ENCODE measurements at regions of chr1 and their contacts with region 1.

Region 1: DNA sequence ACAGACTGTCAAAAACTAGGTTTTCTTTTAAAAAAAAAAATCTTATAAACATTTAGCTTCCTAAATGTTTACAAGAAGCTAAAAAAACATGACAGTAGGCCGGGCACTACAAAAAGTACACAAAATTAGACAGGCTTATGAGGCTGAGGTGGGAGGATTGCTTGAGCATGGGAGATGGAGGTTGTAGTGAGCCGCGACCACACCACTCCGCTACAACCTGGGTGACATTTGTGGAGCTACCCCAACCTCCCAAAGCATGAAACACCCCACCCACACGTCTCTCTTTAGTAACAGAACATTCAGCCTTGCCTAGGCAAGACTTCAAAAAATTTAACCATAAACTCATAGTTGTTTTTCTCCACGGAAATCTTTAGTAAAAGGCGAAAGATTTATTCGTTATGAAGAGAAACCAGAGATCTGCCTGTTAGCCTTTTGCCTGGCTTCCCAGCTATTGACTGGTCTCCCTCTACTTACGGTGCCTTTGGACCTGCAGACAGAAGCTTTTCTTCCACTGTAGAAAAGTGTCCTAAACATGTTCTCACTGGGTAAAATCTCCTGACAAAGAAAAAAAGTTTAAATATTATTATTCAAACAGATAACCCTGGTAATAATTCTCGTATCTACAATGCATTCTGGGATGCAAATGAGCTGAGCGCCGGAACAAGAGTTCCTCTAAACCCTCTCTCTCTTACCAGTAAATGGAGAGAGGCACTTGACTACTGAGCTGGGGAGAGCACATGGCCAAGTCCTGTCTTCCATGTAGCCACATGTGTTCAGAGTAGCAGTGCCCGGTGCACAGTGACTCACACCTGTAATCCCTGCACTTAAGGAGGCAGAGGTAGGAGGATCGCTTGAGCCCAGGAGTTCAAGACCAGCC is 9.2 kb downstream of the RNU5D-1 start:
- DNase-seq: peak; percentile 93
- ATAC-seq: peak; percentile 86
- H3K4me3 Mint-ChIP-seq: peak overlapping the region; percentile 52
- H3K27ac Mint-ChIP-seq: peak overlapping the region; percentile 99
- H3K4me1 Mint-ChIP-seq: peaks cover 75% of the 10 kb centered on the region
- H3K27me3 Mint-ChIP-seq: no peaks in the 10 kb centered on the region

Region 2: GRCh38 chr1:44631647-44632539 is 89.8 kb before region 1 on chr1:
- CTCF ChIA-PET with region 1: interaction called, 3 read pairs
- POLR2A ChIA-PET with region 1: interaction called, 31 read pairs
- DNase-seq: peak; percentile 94
- ATAC-seq: peak; percentile 86
- H3K4me3 Mint-ChIP-seq: peak overlapping the region; percentile 88
- H3K27ac Mint-ChIP-seq: peak overlapping the region; percentile 97
- H3K4me1 Mint-ChIP-seq: peaks cover 27% of the 10 kb centered on the region
- H3K27me3 Mint-ChIP-seq: no peaks in the 10 kb centered on the region

Region 3: DNA sequence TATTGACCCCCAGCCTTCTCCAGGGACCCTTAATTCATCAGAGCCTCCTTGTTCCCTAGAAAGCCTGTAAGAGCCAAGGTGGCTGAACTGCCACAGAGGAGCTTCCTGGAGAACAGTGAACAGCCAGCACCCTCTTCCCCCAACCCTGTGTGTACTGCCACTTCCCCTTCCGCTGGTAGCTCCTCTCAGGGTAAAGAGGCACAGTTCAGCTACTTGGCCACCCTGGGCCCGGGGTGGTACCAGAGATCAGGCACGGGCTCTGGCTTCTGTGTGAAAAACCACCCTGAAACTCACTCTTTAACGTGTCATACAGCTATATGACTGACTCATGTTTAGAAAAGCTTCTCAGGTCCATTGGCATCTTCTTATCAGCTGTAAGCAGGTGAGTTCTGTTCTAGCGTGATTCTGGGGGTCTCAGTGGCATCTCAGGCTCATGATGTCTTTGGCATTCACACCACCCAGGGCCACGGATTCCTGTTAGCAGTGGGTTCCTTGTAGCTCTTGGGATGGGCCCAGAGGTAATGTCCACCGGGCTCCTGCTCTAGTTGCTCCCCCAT is 24.9 kb before region 1 on chr1:
- CTCF ChIA-PET with region 1: interaction called, 19 read pairs
- POLR2A ChIA-PET with region 1: interaction called, 75 read pairs
- DNase-seq: peak; percentile 71
- ATAC-seq: peak; percentile 94
- H3K4me3 Mint-ChIP-seq: peak overlapping the region; percentile 42
- H3K27ac Mint-ChIP-seq: peak overlapping the region; percentile 89
- H3K4me1 Mint-ChIP-seq: peaks cover 31% of the 10 kb centered on the region
- H3K27me3 Mint-ChIP-seq: no peaks in the 10 kb centered on the region

Region 4: GRCh38 chr1:44747878-44748277 is 26.2 kb after region 1 on chr1:
- CTCF ChIA-PET with region 1: interaction called, 4 read pairs
- POLR2A ChIA-PET with region 1: interaction called, 64 read pairs
- DNase-seq: no peak
- ATAC-seq: no peak
- H3K4me3 Mint-ChIP-seq: no peak overlapping the region
- H3K27ac Mint-ChIP-seq: no peak overlapping the region
- H3K4me1 Mint-ChIP-seq: peaks cover 32% of the 10 kb centered on the region
- H3K27me3 Mint-ChIP-seq: no peaks in the 10 kb centered on the region

Region 5: GRCh38 chr1:44786138-44786840 is 64.6 kb after region 1 on chr1:
- CTCF ChIA-PET with region 1: interaction called, 3 read pairs
- POLR2A ChIA-PET with region 1: interaction called, 65 read pairs
- DNase-seq: peak; percentile 82
- ATAC-seq: peak; percentile 64
- H3K4me3 Mint-ChIP-seq: peak overlapping the region; percentile 64
- H3K27ac Mint-ChIP-seq: peak overlapping the region; percentile 74
- H3K4me1 Mint-ChIP-seq: peaks cover 42% of the 10 kb centered on the region
- H3K27me3 Mint-ChIP-seq: no peaks in the 10 kb centered on the region

Region 6: DNA sequence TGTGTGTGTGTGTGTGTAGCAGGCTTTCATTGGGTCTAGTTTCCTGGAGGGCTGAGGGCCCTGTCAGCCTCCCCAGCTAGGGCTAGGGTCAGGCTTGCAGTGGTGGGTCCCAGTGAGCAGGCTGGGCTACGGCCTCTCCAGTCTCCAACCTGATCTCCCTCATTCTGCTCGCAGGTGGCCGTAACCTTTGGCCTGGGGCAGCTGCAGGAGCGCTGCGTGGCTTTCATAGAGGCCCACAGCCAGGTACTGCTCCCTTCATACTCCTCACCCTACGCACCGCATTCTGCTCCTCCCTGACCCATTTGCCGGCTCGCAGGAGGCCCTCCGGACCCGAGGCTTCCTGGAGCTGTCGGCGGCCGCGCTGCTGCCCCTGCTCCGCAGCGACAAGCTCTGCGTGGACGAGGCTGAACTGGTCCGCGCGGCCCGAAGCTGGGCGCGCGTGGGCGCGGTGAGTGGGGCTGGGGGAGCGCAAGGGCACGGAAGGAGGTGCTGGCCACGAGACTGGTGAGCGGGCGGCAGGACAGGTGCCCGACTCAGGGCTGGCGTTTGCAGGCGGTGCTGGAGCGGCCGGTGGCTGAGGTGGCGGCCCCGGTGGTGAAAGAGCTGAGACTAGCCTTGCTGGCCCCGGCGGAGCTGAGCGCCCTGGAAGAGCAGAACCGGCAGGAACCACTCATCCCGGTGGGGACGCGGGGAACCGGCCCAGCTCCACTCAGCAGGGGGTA is 91.3 kb after region 1 on chr1:
- CTCF ChIA-PET with region 1: no interaction called
- POLR2A ChIA-PET with region 1: interaction called, 564 read pairs
- DNase-seq: no peak
- ATAC-seq: no peak
- H3K4me3 Mint-ChIP-seq: peak overlapping the region; percentile 84
- H3K27ac Mint-ChIP-seq: peak overlapping the region; percentile 100
- H3K4me1 Mint-ChIP-seq: peaks cover 70% of the 10 kb centered on the region
- H3K27me3 Mint-ChIP-seq: no peaks in the 10 kb centered on the region

Region 7: DNA sequence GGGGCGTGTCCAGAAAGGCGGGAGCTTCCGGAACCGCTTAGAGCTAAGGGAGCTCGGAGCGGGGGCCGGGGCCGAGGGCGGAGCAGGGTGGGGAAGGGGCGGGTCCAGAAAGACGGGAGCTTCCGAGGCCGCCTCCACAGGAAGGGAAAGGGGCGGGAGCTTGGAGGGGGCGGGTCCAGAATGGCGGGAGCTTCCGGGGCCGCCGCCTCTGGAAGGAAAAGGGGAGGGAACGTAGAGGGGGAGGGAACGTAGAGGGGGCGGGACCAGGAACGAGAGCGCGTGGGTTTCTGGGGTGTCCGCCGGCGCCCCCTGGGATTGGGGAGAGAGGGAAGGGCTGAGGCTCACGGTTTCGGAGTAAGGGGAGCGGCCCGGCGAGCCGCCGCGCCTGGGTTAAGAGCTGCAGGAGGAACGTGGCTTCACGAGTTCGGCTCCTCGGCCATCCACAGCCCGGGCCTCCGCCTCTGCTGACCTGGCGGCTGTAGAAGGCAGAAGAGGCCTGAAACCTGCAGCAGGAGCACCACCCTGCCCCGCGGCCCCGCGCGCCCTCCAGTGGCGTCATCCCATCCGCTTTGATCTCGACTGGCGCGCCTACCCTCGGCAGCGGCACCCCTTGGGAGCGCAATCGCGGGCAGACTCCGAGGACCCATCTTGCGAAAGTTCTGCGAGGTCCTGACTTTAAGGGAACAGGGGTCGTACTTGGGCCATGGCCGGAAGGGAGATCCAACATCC is 582.0 kb after region 1 on chr1:
- CTCF ChIA-PET with region 1: no interaction called
- POLR2A ChIA-PET with region 1: interaction called, 12 read pairs
- DNase-seq: peak; percentile 99
- ATAC-seq: peak; percentile 89
- H3K4me3 Mint-ChIP-seq: peak overlapping the region; percentile 89
- H3K27ac Mint-ChIP-seq: peak overlapping the region; percentile 97
- H3K4me1 Mint-ChIP-seq: peaks cover 40% of the 10 kb centered on the region
- H3K27me3 Mint-ChIP-seq: no peaks in the 10 kb centered on the region